Activated B cell treated with CpG ODN at 0.5 μM for 24 hours (primary cell): ENCODE measurements at regions of chr9 and their contacts with region 1.

Region 1: DNA sequence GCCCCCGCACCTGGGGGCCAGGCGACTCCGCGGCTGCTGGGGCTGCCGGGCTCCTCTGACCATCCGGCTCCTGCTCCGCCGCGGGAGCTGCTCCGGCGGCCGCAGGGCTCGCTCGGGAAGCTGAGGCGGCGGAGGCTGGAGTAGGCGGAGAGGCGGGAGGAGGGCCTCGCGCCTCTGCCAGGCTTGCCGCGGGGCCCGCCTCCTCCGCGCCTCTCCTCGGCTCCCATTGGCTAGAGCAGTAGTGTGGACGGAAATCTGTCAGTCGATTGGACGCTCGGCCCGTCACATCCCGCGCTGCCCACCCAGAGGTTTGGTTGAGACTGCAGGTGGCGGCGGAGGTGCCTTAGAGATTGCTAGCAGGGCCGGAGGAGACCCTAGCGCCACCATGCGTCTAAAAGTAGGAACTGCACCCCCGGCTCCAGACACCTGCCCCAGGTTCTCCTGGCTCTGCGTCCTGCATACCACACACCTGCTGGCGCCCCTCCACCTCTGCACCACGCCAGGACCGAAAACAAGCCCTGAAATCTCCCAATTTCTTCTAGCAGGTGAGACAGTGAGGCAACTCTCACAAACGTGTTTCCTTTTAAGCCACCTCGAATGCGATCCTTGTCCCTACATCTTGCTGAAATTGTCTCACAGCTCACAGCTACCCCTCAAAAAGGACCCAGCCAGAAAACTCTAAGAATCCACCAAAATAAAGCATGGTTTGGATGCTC is at the start of gene SCAI:
- DNase-seq: peak; percentile 90
- ATAC-seq: peak; percentile 99
- H3K4me3 Mint-ChIP-seq: peak within 1 kb of the TSS; percentile 92
- H3K27ac Mint-ChIP-seq: peak within 1 kb of the TSS; percentile 36
- H3K4me1 Mint-ChIP-seq: peaks cover 22% of the 10 kb centered on the region
- H3K27me3 Mint-ChIP-seq: no peaks in the 10 kb centered on the region
- CTCF ChIP-seq: peak; percentile 91
- total RNA-seq, gene SCAI: 10.7 and 11.7 TPM in 2 replicates

Region 2: DNA sequence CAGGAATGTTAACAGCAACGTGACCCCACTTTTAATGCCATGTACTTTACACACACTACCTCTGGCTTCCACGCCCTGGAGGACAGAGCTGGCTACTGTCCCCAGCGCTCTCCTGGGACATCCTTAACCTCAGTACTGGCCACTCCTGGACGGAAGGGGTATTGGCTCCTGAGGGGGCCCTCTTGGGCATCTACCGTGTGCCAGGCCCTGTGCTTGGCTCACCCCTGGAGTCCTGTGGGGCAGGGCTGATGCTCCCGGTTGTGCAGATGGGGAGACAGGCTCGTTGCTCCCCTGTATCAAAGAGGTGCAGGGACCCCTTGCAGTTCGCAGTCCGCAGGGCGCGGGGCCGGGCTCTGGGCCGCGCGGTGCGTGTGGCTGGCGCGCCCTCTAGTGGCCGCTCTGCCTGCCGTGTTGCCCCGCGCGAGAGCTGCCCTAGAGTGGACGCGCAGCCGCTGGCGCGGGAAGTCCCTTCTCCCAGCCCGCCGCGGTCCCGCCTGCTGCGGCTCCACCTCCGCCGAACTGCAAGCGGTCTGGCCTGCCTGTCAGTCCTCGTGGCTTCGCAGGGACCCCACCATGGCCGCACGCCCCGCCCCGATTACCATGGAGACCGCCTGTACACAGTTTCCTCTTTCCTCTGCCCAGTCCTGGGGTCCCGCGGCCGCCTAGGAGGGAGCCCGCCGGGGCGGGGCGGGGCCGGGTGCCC is 290.6 kb before region 1 on chr9 and contains the start of gene WDR38:
- CTCF ChIA-PET with region 1: interaction called, 7 read pairs
- POLR2A ChIA-PET with region 1: no interaction called
- intact Hi-C with region 1: loop called (anchors 1 kb)
- DNase-seq: peak; percentile 81
- ATAC-seq: peak; percentile 82
- H3K4me3 Mint-ChIP-seq: peak within 1 kb of the TSS; percentile 81
- H3K27ac Mint-ChIP-seq: no peak within 1 kb of the TSS
- H3K4me1 Mint-ChIP-seq: peaks cover 15% of the 10 kb centered on the region
- H3K27me3 Mint-ChIP-seq: no peaks in the 10 kb centered on the region
- CTCF ChIP-seq: peak; percentile 92
- total RNA-seq, gene WDR38: not detected in 2 replicates

Region 3: DNA sequence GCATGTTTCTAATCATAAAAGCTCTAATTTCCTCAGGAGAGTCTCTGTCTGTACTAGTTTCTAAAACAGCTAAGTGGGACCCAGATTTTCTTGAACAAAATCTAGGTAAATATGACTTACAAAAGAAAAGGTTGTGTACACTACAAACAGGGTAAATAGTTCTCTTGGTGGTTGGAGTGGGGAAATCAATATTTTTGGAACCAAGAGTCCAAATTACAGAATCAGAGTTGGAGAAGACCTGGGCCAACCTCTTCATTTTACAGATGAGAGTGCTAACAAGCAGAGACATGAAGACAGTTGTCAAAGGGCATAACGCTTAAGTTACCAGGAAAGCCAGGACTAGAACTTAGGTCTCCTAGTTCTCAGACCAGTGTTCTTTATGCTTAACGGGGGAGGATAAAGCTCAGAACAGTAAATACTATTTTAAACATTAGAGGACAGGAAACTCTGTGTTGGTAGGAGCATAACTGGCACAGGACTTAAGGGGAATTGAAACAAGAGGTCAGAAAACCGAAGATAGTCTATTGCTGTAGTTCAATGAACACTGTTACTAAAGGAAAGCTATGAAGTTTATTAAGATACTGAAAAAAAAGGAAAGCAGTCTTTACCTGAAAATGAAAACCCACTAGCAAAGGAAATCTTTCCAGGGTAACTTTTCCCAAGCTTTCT is 193.3 kb before region 1 on chr9:
- CTCF ChIA-PET with region 1: no interaction called
- POLR2A ChIA-PET with region 1: interaction called, 12 read pairs
- intact Hi-C with region 1: no loop called
- DNase-seq: no peak
- ATAC-seq: no peak
- H3K4me3 Mint-ChIP-seq: no peak overlapping the region
- H3K27ac Mint-ChIP-seq: peak overlapping the region; percentile 74
- H3K4me1 Mint-ChIP-seq: peaks cover 17% of the 10 kb centered on the region
- H3K27me3 Mint-ChIP-seq: no peaks in the 10 kb centered on the region
- CTCF ChIP-seq: no peak

Region 4: DNA sequence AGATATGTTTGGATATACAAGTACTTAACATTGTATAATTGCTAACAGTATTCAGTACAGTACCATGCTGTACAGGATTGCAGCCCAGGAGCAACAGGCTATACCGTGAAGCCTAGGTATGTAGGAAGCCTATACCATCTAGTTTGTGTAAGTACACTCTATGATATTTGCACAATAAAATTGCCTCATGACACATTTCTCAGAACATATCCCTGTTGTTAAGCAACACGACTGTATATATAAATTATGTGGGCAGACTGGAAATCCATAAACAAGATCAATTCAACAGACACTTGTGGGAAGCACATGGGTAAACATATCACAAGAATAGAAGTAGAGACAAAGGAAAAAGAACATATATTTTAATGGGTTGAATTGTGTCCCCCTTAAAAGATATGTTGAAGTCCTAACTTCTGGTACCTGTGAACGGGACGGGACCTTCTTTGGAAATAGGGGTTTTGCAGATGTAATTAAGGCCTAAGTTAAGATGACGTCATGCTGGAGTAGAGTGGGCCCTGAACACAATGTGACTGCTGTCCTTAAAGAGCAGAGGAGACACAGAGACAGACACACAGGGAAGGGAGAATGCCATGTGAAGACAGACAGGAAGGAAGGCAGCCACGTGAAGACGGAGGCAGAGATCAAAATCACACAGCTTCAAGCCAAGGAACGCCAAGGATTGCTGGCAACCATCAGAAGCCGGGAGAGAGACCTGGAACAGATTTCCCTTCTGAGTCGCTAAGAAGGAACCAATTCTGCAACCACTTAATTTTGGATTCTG is 76.5 kb before region 1 on chr9:
- CTCF ChIA-PET with region 1: no interaction called
- POLR2A ChIA-PET with region 1: no interaction called
- intact Hi-C with region 1: no loop called
- DNase-seq: no peak
- ATAC-seq: no peak
- H3K4me3 Mint-ChIP-seq: no peak overlapping the region
- H3K27ac Mint-ChIP-seq: no peak overlapping the region
- H3K4me1 Mint-ChIP-seq: no peaks in the 10 kb centered on the region
- H3K27me3 Mint-ChIP-seq: no peaks in the 10 kb centered on the region
- CTCF ChIP-seq: no peak

Region 5: DNA sequence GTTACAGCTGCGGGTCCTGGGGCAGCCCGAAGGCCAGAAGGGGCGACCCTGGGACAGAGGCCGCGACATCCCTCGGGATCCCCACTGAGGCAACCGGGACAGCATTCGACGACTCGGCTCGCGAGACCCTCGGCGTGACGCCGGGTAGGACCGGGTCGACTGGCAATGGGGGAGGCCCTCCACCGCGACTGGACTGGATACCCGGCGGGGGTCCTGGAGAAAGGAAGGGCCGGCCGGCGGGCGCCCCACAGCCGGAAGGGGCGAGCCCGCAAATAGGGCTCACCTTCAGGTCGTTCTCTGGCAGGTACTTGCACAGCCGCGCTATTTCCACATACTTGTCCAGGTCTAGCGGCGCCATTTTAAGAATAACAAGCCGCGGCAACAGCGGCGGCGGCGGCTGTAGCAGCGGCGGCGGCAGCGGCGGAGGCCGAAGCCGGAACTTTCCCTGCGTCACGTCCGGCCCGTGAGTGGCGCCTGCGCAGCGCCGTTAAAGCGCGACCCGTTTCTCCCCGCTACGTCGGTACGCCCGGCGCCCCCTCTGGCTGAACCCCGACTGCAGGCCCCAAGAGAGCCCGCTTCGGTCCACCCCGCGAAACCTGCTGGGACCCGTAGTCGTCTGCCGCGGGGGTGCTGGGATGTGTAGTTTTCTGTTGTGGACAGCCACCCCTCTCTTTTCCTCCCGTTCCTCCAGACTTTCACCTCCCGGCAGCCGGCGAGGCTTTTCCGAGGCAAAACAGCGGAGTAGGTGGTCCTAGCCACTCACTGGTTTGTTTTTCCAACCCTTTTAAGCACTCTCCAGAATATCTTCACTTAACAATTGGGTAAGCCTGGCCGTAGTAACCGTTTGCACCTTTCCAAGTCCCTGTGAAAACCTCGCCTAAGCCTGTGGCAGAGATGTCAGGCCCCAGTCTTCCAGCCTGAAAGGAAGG is 46.1 kb after region 1 on chr9 and contains the start of gene PPP6C:
- CTCF ChIA-PET with region 1: no interaction called
- POLR2A ChIA-PET with region 1: no interaction called
- intact Hi-C with region 1: loop called (anchors 1 kb)
- DNase-seq: peak; percentile 93
- ATAC-seq: peak; percentile 98
- H3K4me3 Mint-ChIP-seq: peak within 1 kb of the TSS; percentile 97
- H3K27ac Mint-ChIP-seq: peak within 1 kb of the TSS; percentile 91
- H3K4me1 Mint-ChIP-seq: peaks cover 44% of the 10 kb centered on the region
- H3K27me3 Mint-ChIP-seq: no peaks in the 10 kb centered on the region
- CTCF ChIP-seq: no peak
- total RNA-seq, gene PPP6C: 41.2 and 47.0 TPM in 2 replicates

Region 6: DNA sequence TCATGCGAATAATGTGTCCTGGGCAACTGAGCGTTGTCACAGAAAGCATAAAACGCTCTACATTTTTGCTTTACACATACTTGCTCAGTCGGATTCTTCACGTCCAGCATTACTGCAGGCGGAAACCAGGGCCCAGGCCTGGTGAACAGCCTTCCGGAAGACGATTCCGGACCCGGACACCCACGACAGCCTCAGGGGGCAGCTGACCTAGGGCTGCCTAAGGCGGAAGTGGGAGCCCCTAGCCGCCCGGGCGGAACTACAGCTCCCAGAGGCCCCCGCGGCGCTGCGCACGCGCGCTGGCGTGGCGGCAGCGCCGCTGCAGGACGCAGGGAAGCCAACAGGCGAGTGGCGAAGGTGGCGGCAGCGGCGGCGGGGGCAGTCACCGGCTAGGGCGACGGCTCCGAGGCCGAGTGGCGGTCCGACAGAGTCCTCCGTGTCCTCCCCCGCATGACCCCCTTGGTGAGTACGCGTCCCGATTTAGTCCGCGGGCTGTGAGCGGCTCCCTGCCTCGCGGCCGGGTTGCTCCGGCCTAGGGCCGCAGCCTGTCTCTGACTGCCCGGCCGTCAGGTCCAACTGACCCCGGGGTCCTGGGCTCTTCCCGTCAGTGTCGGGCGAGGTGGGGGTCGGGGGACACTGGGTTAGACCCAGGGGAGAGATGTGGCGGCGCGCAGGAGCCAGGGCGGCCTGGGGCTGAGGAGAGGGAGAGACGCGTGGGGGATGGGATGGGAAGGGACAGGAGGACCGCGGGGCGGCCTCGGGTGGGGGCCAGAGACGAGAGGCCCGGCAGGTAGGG is 118.2 kb after region 1 on chr9 and contains the start of gene GAPVD1:
- CTCF ChIA-PET with region 1: no interaction called
- POLR2A ChIA-PET with region 1: no interaction called
- intact Hi-C with region 1: loop called (anchors 2 kb)
- DNase-seq: peak; percentile 97
- ATAC-seq: peak; percentile 93
- H3K4me3 Mint-ChIP-seq: peak within 1 kb of the TSS; percentile 96
- H3K27ac Mint-ChIP-seq: peak within 1 kb of the TSS; percentile 99
- H3K4me1 Mint-ChIP-seq: peaks cover 48% of the 10 kb centered on the region
- H3K27me3 Mint-ChIP-seq: peaks cover 2% of the 10 kb centered on the region
- CTCF ChIP-seq: no peak
- total RNA-seq, gene GAPVD1: 46.6 and 53.9 TPM in 2 replicates

Region 7: DNA sequence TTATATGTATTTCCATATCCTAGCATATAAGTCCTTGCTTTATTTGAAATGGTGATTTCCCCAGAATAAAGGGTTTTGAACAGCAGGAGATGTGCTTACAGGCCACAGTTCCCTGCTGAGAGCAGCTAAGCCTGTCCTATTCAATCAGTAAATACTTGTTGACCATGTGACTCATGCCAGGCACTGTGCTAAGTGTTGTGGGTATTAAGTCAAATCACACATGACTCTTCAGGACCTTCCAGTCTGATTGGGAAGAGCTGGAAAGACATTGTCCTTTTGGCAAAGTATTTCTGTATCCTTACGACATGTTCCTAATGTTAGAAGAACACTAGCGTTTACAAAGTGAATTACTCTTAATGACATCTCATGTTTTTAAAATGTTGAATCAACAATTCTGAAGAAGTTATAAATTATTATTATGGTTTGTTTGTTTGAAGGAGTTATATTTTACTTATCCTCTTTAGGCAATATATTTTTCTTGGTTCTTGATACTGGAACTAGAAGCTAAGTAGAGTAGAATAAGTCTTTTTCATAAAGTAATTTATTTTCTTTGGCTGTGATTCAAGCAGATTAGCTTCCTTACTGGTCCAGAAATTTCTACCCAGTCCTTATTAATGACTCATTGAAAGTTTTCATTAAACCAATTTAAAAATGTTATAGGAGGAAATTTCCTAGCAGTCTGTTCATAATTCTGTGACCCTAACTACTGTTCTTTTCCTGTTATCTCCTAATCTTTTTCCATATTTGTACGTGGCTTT is 200.2 kb after region 1 on chr9:
- CTCF ChIA-PET with region 1: no interaction called
- POLR2A ChIA-PET with region 1: no interaction called
- intact Hi-C with region 1: no loop called
- DNase-seq: no peak
- ATAC-seq: no peak
- H3K4me3 Mint-ChIP-seq: no peak overlapping the region
- H3K27ac Mint-ChIP-seq: no peak overlapping the region
- H3K4me1 Mint-ChIP-seq: no peaks in the 10 kb centered on the region
- H3K27me3 Mint-ChIP-seq: no peaks in the 10 kb centered on the region
- CTCF ChIP-seq: no peak